ENCODE measurements at regions of chr5 and their contacts with region 1.

Region 1: GRCh38 chr5:166324372-166324771 is 1967.1 kb upstream of the WWC1 start:
- DNase-seq: peak in 1 of 2 experiments; percentile 2
- H3K4me3 ChIP-seq: peak overlapping the region in 1 of 4 experiments; percentile 23; a peak in 1 of 8 replicates
- H3K27ac ChIP-seq: no peak overlapping the region
- H3K4me1 ChIP-seq: peaks cover 0 to 21% (median 11%) of the 10 kb centered on the region in 4 experiments; a peak in 5 of 7 replicates
- H3K27me3 ChIP-seq: peaks cover 0 to 13% (median 4%) of the 10 kb centered on the region in 4 experiments; a peak in 4 of 7 replicates
- CTCF ChIP-seq: no peak
- EP300 ChIP-seq: no peak
- POLR2A ChIP-seq: no peak
- RAD21 ChIP-seq: no peak

Region 2: DNA sequence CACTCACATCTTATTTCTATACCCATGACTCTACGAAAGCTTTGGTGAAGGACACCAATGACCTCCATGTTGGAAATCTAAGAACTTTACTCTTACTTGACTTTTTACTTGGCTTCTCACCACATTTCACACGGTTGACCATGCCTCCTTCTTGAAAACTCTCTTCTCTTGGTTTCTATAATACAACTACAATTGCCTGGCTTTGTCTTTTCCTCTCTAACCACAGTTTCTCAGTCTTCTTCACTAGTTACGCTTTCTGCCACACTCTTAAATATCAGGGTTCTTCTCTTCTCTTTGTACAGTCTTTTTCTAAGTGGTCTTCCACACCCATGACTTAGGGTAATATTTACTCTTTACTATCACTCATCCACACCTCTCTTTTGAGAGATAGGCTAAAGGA is 112.7 kb before region 1 on chr5:
- CTCF ChIA-PET with region 1: no interaction called
- POLR2A ChIA-PET with region 1: no interaction called
- DNase-seq: no peak
- H3K4me3 ChIP-seq: no peak overlapping the region
- H3K27ac ChIP-seq: no peak overlapping the region
- H3K4me1 ChIP-seq: no peaks in the 10 kb centered on the region
- H3K27me3 ChIP-seq: no peaks in the 10 kb centered on the region
- CTCF ChIP-seq: no peak
- EP300 ChIP-seq: no peak
- POLR2A ChIP-seq: no peak
- RAD21 ChIP-seq: no peak

Region 3: GRCh38 chr5:166293892-166294291 is 30.5 kb before region 1 on chr5:
- CTCF ChIA-PET with region 1: no interaction called
- POLR2A ChIA-PET with region 1: no interaction called
- DNase-seq: no peak
- H3K4me3 ChIP-seq: no peak overlapping the region
- H3K27ac ChIP-seq: no peak overlapping the region
- H3K4me1 ChIP-seq: no peaks in the 10 kb centered on the region
- H3K27me3 ChIP-seq: no peaks in the 10 kb centered on the region
- CTCF ChIP-seq: no peak
- EP300 ChIP-seq: no peak
- POLR2A ChIP-seq: no peak
- RAD21 ChIP-seq: no peak

Region 4: GRCh38 chr5:166341708-166342337 is 17.5 kb after region 1 on chr5:
- CTCF ChIA-PET with region 1: interaction called, 11 read pairs
- POLR2A ChIA-PET with region 1: no interaction called
- DNase-seq: no peak
- H3K4me3 ChIP-seq: no peak overlapping the region
- H3K27ac ChIP-seq: no peak overlapping the region
- H3K4me1 ChIP-seq: peaks cover 0 to 5% (median 1%) of the 10 kb centered on the region in 4 experiments; a peak in 2 of 7 replicates
- H3K27me3 ChIP-seq: no peaks in the 10 kb centered on the region
- CTCF ChIP-seq: peak; percentile 7 to 63 (median 18); a peak in 3 of 4 replicates
- EP300 ChIP-seq: no peak
- POLR2A ChIP-seq: no peak
- RAD21 ChIP-seq: peak; percentile 37 to 57; a peak in 3 of 4 replicates